Activated B cell treated with CpG ODN at 0.5 μM for 24 hours (primary cell): ENCODE measurements at regions of chr10 and their contacts with region 1.

Region 1: GRCh38 chr10:101782811-101783735 is at the start of gene NPM3:
- DNase-seq: peak; percentile 66
- ATAC-seq: peak; percentile 75
- H3K4me3 Mint-ChIP-seq: peak within 1 kb of the TSS; percentile 100
- H3K27ac Mint-ChIP-seq: peak within 1 kb of the TSS; percentile 90
- H3K4me1 Mint-ChIP-seq: peaks cover 53% of the 10 kb centered on the region
- H3K27me3 Mint-ChIP-seq: peaks cover 6% of the 10 kb centered on the region
- CTCF ChIP-seq: no peak
- total RNA-seq, gene NPM3: 48.1 and 60.7 TPM in 2 replicates

Region 2: DNA sequence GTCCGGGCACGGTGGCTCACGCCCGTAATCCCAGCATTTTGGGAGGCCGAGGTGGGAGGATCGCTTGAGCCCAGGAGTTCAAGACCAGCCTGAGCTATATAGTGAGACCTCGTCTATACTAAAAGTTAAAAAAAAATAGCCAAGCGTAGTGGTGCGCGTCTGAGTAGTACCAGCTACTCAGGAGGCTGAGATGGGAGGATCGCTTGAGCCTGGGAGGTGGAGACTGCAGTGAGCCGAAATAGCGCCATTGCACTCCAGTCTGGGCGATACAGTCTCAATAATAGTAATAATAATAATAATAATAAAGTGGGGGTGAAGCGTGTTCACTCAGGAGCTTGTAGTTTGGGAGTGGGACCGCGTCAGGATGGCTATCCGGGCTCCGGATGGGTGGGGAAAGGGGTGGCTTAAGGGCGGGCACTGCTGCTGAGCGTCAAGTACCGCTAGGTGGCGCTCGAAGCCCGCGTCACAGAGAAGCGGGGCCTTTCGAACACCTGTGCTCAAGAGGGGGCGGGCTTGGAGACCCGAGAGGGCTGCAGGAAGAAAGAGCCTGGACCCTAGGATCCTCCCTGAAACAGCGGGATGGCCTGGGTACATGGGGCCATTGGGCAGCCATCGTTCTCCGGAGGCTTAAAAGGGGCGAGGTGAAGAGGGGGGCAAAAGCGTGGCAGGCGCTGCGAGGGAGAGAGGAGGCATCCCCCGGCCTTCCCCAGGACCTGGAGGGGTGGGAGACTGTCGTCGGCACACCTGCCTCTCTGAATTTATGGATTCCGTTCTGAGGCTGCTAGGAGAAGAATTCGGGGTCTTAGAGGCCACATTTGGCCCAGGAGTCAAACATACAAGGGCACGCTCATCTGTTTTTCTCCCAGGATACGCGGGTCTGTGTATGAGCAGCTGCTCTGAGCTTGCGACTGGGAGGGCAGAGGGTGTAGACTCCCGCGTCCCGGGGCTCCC is 568.4 kb before region 1 on chr10:
- CTCF ChIA-PET with region 1: interaction called, 3 read pairs
- POLR2A ChIA-PET with region 1: no interaction called
- intact Hi-C with region 1: loop called (anchors 1 kb)
- DNase-seq: peak; percentile 72
- ATAC-seq: peak; percentile 75
- H3K4me3 Mint-ChIP-seq: peak overlapping the region; percentile 60
- H3K27ac Mint-ChIP-seq: peak overlapping the region; percentile 68
- H3K4me1 Mint-ChIP-seq: peaks cover 32% of the 10 kb centered on the region
- H3K27me3 Mint-ChIP-seq: peaks cover 56% of the 10 kb centered on the region
- CTCF ChIP-seq: peak; percentile 73

Region 3: DNA sequence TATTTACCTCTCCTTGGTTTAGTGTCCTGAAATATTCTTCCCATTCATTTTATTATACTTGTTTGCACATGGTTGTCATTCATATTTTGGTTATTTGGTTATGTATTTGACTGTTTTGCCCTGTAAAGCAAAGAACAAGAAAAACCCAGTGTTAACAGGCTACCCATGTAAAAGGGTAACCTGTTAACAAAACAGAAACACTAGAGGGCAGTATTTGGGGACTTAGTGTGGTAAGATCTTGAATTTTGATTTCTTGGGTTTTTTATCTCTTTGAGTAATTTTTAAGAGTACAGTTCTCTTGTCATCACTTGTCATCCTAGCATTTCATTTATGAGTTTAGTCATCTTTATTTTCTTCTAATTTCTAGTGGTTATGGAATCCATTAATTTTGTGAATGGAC is 246.3 kb before region 1 on chr10:
- CTCF ChIA-PET with region 1: no interaction called
- POLR2A ChIA-PET with region 1: no interaction called
- intact Hi-C with region 1: loop called (anchors 2 kb)
- DNase-seq: no peak
- ATAC-seq: no peak
- H3K4me3 Mint-ChIP-seq: no peak overlapping the region
- H3K27ac Mint-ChIP-seq: no peak overlapping the region
- H3K4me1 Mint-ChIP-seq: no peaks in the 10 kb centered on the region
- H3K27me3 Mint-ChIP-seq: no peaks in the 10 kb centered on the region
- CTCF ChIP-seq: no peak

Region 4: DNA sequence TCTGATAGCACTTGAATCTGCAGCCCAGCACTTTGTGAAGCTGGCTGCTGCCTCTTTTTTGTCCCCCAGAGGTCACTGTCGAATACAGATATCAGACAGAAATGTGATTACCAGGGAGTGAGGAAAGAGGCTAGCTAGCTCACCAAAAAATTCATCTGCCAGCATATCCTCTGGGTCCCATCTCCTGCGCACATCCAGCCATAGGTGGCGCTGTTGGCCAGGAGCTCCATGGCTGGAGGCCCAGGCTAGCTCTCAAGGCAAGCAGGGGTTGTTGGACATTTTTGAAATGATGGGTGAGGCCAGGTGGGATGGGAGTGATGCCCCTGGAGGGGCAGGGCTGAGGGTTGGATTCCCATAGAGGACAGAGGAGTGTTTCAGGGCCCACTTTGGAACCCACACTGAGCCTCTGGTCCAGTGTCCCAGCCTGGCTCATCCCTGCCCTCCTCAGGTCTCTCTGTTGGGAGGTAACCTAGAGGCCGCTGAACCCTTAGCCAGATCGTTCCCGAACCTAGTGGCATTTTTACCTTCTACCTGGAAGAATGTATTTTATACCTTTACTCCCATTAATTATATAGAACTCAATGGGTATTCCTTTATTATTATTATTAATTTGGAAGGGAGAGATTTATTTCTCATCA is 180.2 kb before region 1 on chr10:
- CTCF ChIA-PET with region 1: interaction called, 13 read pairs
- POLR2A ChIA-PET with region 1: no interaction called
- intact Hi-C with region 1: loop called (anchors 1 kb)
- DNase-seq: peak; percentile 36
- ATAC-seq: peak; percentile 75
- H3K4me3 Mint-ChIP-seq: no peak overlapping the region
- H3K27ac Mint-ChIP-seq: no peak overlapping the region
- H3K4me1 Mint-ChIP-seq: no peaks in the 10 kb centered on the region
- H3K27me3 Mint-ChIP-seq: no peaks in the 10 kb centered on the region
- CTCF ChIP-seq: no peak

Region 5: DNA sequence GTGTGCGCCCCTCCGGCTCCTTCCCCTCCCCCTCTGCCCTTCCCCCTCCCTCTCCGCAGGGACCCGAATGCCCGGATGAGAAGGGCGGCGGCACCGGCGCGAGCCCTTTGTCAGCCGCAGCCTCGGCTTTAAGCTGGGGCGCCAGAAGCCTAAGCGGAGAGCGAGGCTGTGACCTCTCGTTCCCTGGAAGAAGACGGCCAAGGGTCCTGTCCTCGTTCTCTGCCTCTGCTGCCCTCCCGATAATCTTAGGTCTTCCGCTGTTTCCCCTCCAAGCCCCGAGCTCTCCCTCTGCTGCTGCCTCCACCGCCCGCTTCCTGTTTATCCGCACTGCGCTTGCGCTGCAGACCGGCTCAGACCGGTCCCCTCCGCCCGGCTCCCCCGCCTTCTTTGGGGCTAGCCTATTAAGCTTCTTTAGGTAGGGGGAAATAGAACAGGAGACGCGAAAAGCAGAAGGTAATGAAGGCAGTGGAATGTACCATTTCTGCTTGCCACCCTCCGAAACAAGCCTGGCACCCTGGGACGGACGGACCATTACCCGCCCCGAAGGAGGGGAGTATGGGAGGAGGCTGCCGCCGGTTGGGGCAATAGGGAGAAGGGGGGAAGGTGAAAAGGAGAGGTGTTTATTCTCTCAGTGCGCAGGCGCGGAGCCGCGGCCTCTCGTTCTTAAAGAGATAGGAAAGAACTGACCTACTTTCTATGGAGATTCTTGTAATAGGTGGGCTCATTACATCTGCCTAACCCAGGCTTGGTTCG is 35.2 kb after region 1 on chr10 and contains the start of gene OGA:
- CTCF ChIA-PET with region 1: interaction called, 13 read pairs
- POLR2A ChIA-PET with region 1: interaction called, 43 read pairs
- intact Hi-C with region 1: loop called (anchors 1 kb)
- DNase-seq: peak; percentile 91
- ATAC-seq: peak; percentile 86
- H3K4me3 Mint-ChIP-seq: peak within 1 kb of the TSS; percentile 98
- H3K27ac Mint-ChIP-seq: peak within 1 kb of the TSS; percentile 99
- H3K4me1 Mint-ChIP-seq: peaks cover 42% of the 10 kb centered on the region
- H3K27me3 Mint-ChIP-seq: no peaks in the 10 kb centered on the region
- CTCF ChIP-seq: no peak
- total RNA-seq, gene OGA: 209 and 271 TPM in 2 replicates

Region 6: DNA sequence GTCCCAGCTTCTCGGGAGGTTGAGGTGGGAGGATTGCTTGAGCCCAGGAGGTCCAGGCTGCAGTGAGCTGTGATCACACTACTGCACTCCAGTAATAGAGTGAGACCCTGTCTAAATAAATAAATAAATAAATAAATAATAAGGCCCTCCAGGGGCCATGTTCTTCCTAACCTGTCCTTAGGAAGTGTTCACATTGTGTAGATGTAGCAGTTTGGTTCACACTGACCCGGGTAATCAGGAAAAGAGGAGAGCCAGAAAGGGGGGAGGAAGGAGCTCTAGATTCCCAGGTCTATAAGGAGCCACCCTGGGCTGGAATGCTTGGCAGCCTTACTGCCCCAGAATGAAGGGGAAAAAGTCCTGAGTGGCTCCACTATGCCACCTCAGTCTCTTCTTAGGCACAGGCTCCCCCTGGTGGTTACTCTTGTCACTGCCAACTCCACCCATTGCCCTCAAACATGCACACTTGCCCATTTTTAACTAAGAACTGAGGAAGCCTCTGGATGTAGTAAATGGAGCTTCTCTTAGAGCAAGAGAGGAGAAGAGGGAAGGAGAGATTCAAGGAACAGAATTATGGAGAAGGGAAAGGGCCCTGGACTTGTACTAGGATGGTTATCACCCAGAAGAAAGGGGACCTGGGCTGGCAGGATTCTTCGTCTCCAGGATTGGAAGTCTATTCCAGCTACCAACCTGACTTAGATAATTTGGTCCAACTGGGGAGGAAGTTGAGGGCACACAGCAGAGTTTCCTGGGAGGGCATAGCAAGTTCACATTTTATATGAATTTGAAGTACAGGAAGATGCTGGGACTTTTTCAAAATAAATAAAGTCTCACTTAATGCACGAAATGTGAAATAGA is 289.8 kb after region 1 on chr10:
- CTCF ChIA-PET with region 1: interaction called, 11 read pairs
- POLR2A ChIA-PET with region 1: no interaction called
- intact Hi-C with region 1: loop called (anchors 1 kb)
- DNase-seq: peak; percentile 65
- ATAC-seq: peak; percentile 95
- H3K4me3 Mint-ChIP-seq: no peak overlapping the region
- H3K27ac Mint-ChIP-seq: no peak overlapping the region
- H3K4me1 Mint-ChIP-seq: no peaks in the 10 kb centered on the region
- H3K27me3 Mint-ChIP-seq: no peaks in the 10 kb centered on the region
- CTCF ChIP-seq: peak; percentile 73